H1 (cell line): ENCODE measurements at regions of chr9 and their contacts with region 1.

Region 1: GRCh38 chr9:6055213-6055612 is 39.8 kb upstream of the RANBP6 start:
- DNase-seq: no peak
- H3K4me3 ChIP-seq: no peak overlapping the region
- H3K27ac ChIP-seq: no peak overlapping the region
- H3K4me1 ChIP-seq: 0 out of 7 replicates have a peak, but pooled peaks cover 0 to 4% (median 0%) of the 10 kb centered on the region in 4 experiments
- H3K27me3 ChIP-seq: no peaks in the 10 kb centered on the region
- CTCF ChIP-seq: peak in 2 of 3 experiments; percentile 56 to 59; a peak in 3 of 4 replicates
- EP300 ChIP-seq: no peak
- POLR2A ChIP-seq: no peak
- RAD21 ChIP-seq: peak; percentile 92 to 95

Region 2: DNA sequence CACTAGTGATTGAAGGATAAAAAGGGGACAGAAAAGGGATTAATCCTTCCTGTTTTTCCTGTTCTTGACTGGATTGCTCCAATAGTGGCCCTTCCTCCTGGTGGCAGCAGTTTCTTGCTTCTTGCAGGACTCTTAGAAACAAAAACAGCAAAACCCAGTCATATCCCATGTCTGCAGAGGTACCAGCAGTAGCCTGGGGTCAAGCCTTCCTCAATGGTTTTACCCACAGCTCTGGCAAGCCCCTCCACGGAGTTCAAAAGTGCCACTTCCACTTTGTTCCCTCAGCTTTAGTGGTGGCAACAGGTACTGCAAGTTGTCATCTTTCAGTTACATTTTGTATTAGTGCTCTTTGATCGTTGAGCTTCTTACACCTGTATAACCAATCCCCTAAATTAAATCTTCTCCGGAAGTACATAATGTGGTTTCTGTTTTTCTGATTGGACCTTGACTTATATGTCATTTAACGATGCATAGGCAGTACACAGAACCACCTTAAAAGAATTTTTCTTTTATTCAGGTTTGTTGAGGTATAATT is 31.1 kb before region 1 on chr9:
- CTCF ChIA-PET with region 1: interaction called, 10 read pairs
- POLR2A ChIA-PET with region 1: no interaction called
- DNase-seq: peak in 1 of 2 experiments; percentile 50
- H3K4me3 ChIP-seq: no peak overlapping the region; a peak in 1 of 8 replicates
- H3K27ac ChIP-seq: no peak overlapping the region
- H3K4me1 ChIP-seq: peaks cover 0 to 2% (median 0%) of the 10 kb centered on the region in 4 experiments; a peak in 1 of 7 replicates
- H3K27me3 ChIP-seq: no peaks in the 10 kb centered on the region
- CTCF ChIP-seq: peak in 2 of 3 experiments; percentile 21 to 59; a peak in 3 of 4 replicates
- EP300 ChIP-seq: no peak
- POLR2A ChIP-seq: no peak
- RAD21 ChIP-seq: peak; percentile 0 to 3; a peak in 1 of 4 replicates

Region 3: GRCh38 chr9:6080154-6080716 is 25.0 kb after region 1 on chr9:
- CTCF ChIA-PET with region 1: interaction called, 17 read pairs
- POLR2A ChIA-PET with region 1: no interaction called
- DNase-seq: peak; percentile 92 to 99
- H3K4me3 ChIP-seq: peak overlapping the region in 3 of 4 experiments; percentile 15 to 49 (median 41); a peak in 4 of 8 replicates
- H3K27ac ChIP-seq: 0 out of 2 replicates have a peak overlapping the region, but pooled peaks have one; percentile 46
- H3K4me1 ChIP-seq: peaks cover 0 to 12% (median 5%) of the 10 kb centered on the region in 4 experiments; a peak in 3 of 7 replicates
- H3K27me3 ChIP-seq: no peaks in the 10 kb centered on the region
- CTCF ChIP-seq: peak in 2 of 3 experiments; percentile 0 to 16; a peak in 2 of 4 replicates
- EP300 ChIP-seq: no peak
- POLR2A ChIP-seq: peak in 1 of 2 experiments; percentile 86; a peak in 2 of 3 replicates
- RAD21 ChIP-seq: peak in 1 of 2 experiments; percentile 5; a peak in 1 of 4 replicates

Region 4: DNA sequence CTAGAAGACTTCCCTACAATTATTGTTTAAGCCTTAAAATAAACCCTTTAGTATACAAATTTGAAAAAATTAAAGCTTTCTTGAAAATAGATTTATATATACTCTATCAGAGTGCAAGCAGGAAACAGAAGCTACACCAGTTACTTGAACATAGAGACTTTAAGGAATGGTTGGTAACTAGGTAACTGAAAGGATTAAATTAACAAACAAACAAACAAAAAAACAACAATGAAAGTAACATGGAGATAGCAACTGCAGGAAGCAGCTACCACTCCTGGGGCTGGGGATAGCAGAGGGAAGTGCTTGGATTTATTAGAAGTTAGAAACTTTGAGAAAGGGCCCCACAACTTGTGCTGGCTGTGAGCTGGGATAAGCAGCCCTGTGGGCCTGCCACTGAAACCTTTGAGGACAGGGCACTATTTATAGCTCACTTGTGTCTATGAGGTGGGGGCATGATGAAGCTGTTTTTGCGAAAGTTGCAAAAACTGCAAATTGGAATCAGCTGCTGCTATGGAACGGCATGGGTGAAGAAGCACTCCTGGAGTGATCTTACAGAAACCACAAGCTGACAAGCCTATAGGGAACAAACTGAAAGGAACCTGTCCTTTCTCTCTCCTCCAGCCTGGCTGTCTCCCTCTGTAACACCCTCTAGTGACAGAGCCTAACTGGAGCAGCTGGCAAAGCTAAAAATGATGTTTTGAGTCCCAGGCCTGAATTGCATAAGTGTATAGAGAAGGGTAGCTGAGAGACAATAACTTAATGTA is 51.5 kb after region 1 on chr9:
- CTCF ChIA-PET with region 1: interaction called, 17 read pairs
- POLR2A ChIA-PET with region 1: no interaction called
- DNase-seq: peak; percentile 7 to 48
- H3K4me3 ChIP-seq: no peak overlapping the region
- H3K27ac ChIP-seq: peak overlapping the region; percentile 31; the same call in 1 of the 2 replicates
- H3K4me1 ChIP-seq: peaks cover 0 to 4% (median 1%) of the 10 kb centered on the region in 4 experiments; a peak in 3 of 7 replicates
- H3K27me3 ChIP-seq: no peaks in the 10 kb centered on the region
- CTCF ChIP-seq: peak in 2 of 3 experiments; percentile 56 to 69; a peak in 3 of 4 replicates
- EP300 ChIP-seq: no peak
- POLR2A ChIP-seq: no peak
- RAD21 ChIP-seq: peak; percentile 48 to 61

Region 5: DNA sequence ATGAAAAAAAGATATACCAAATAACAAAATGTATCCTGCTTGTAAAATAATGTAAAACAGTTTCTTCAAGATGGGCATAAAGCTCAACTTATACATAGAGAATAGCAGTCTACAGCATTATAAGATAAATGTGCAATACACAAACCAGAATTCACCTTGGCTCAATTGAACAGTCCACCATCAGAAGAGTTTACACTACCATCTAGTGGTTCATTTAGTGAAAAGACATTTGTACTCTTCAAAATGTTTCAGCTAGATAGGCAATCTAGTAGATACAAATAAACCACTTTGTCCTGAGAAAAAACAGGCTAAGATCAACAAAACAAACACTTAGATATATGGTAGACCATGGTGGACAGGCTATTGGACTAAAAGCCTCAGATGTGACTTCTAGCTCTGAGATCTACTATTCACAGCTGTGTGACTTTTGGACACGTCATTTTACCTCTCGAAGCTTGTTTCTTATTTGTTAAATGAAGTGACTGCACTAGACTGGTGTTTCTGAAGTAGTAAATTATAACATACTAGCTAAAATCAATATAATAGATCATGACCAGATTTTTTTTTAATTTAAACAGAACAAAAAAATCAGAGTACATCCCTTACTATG is 250.8 kb after region 1 on chr9:
- CTCF ChIA-PET with region 1: interaction called, 43 read pairs
- POLR2A ChIA-PET with region 1: interaction called, 3 read pairs
- DNase-seq: no peak
- H3K4me3 ChIP-seq: no peak overlapping the region
- H3K27ac ChIP-seq: no peak overlapping the region
- H3K4me1 ChIP-seq: no peaks in the 10 kb centered on the region
- H3K27me3 ChIP-seq: no peaks in the 10 kb centered on the region
- CTCF ChIP-seq: peak in 2 of 3 experiments; percentile 42 to 48; a peak in 2 of 4 replicates
- EP300 ChIP-seq: no peak
- POLR2A ChIP-seq: no peak
- RAD21 ChIP-seq: peak; percentile 82 to 85